A673 (cell line): ENCODE measurements at regions of chr9 and their contacts with region 1.

Region 1: GRCh38 chr9:85610074-85610860 is 131.5 kb downstream of the AGTPBP1 start:
- DNase-seq: peak; percentile 75
- H3K4me3 ChIP-seq: peak overlapping the region; percentile 27
- H3K27ac ChIP-seq: no peak overlapping the region
- H3K4me1 ChIP-seq: no peaks in the 10 kb centered on the region
- H3K27me3 ChIP-seq: no peaks in the 10 kb centered on the region
- CTCF ChIP-seq: peak; percentile 86

Region 2: DNA sequence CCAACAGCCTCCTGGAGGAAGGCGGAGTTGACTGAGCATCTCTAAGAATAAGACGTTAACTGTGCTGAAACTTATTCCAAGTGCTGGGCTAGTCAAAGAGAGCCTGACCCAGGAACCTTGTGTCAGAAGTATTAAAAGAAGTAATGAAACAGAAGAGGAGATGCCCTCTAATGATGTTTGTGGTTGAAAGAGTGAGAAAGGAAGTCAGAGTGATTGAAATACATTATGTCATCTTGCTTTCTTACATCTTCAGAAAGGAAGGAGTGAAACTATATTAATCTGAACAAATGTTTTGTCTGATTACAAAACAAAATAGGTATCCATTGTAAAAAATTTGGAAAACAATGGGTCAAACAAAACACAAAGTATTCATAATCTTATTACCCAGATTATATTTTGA is 480.0 kb before region 1 on chr9:
- CTCF ChIA-PET with region 1: interaction called, 16 read pairs
- POLR2A ChIA-PET with region 1: no interaction called
- intact Hi-C with region 1: no loop called
- DNase-seq: no peak
- H3K4me3 ChIP-seq: no peak overlapping the region
- H3K27ac ChIP-seq: no peak overlapping the region
- H3K4me1 ChIP-seq: no peaks in the 10 kb centered on the region
- H3K27me3 ChIP-seq: no peaks in the 10 kb centered on the region
- CTCF ChIP-seq: no peak

Region 3: DNA sequence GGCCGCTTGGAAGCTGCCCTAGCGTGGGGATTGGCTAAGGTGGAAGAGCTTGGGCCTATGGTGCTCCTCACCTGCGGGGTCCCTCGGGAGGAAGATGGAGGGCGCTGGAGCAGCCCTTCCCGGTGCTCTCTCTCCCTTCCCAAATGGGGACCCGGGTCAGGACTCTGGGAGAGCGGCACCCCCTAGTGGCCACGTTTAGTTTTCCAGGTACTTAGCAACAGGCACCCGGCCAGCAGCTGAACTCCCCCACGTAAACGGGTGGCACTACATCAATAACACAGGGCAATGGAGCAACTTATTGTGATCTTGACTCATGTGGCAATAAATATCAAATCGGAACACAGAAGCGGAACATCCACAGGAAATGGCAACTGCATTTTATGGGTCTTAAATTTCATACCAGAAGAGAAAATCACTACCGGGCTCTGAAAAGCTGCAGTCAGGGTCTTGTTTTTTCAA is 185.1 kb before region 1 on chr9:
- CTCF ChIA-PET with region 1: interaction called, 12 read pairs
- POLR2A ChIA-PET with region 1: no interaction called
- intact Hi-C with region 1: loop called (anchors 10 kb)
- DNase-seq: peak; percentile 79
- H3K4me3 ChIP-seq: no peak overlapping the region
- H3K27ac ChIP-seq: no peak overlapping the region
- H3K4me1 ChIP-seq: no peaks in the 10 kb centered on the region
- H3K27me3 ChIP-seq: peaks cover 34% of the 10 kb centered on the region
- CTCF ChIP-seq: peak; percentile 92

Region 4: GRCh38 chr9:85508616-85509015 is 101.7 kb before region 1 on chr9:
- CTCF ChIA-PET with region 1: interaction called, 7 read pairs
- POLR2A ChIA-PET with region 1: no interaction called
- intact Hi-C with region 1: loop called (anchors 5 kb)
- DNase-seq: no peak
- H3K4me3 ChIP-seq: no peak overlapping the region
- H3K27ac ChIP-seq: no peak overlapping the region
- H3K4me1 ChIP-seq: no peaks in the 10 kb centered on the region
- H3K27me3 ChIP-seq: peaks cover 4% of the 10 kb centered on the region
- CTCF ChIP-seq: peak; percentile 35; the same call in 1 of the 2 replicates

Region 5: DNA sequence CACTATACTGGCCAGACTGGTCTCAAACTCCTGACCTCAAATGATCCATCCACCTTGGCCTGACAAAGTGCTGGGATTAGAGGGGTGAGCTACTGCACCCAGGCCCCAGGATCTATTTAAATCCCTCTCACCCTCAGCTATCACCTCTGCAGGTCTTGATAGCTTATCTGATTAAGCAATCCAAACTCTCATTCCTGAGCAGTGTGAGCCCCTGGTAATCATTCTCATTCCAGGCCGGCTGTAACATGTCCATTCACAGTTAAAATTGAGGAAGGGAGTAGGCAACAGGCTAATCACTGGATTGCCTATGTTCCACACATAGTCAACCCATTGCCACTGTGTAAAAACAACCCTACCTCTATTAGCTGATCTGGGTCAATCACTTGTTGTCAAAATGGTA is 20.4 kb after region 1 on chr9:
- CTCF ChIA-PET with region 1: interaction called, 15 read pairs
- POLR2A ChIA-PET with region 1: no interaction called
- intact Hi-C with region 1: no loop called
- DNase-seq: no peak
- H3K4me3 ChIP-seq: no peak overlapping the region
- H3K27ac ChIP-seq: no peak overlapping the region
- H3K4me1 ChIP-seq: no peaks in the 10 kb centered on the region
- H3K27me3 ChIP-seq: no peaks in the 10 kb centered on the region
- CTCF ChIP-seq: no peak